K562 (cell line): ENCODE measurements at regions of chr1 and their contacts with region 1.

Region 1: GRCh38 chr1:113207019-113207418 is 134.0 kb downstream of the LRIG2 start:
- DNase-seq: peak in 2 of 4 experiments; percentile 29 to 37
- ATAC-seq: no peak; the same call in 2 of the 3 replicates
- H3K4me3 ChIP-seq: no peak overlapping the region
- H3K27ac ChIP-seq: 0 out of 3 replicates have a peak overlapping the region, but pooled peaks have one; percentile 4
- H3K4me1 ChIP-seq: peaks cover 36 to 43% of the 10 kb centered on the region in 2 experiments
- H3K27me3 ChIP-seq: no peaks in the 10 kb centered on the region
- CTCF ChIP-seq: no peak
- EP300 ChIP-seq: peak; percentile 40; the same call in 1 of the 2 replicates
- POLR2A ChIP-seq: no peak
- RAD21 ChIP-seq: no peak

Region 2: GRCh38 chr1:113219377-113219776 is 12.4 kb after region 1 on chr1:
- CTCF ChIA-PET with region 1: no interaction called
- POLR2A ChIA-PET with region 1: interaction called, 10 read pairs
- in situ Hi-C with region 1: no loop called
- intact Hi-C with region 1: no loop called
- DNase-seq: peak in 2 of 4 experiments; percentile 29 to 56
- ATAC-seq: peak; percentile 75
- H3K4me3 ChIP-seq: no peak overlapping the region
- H3K27ac ChIP-seq: no peak overlapping the region
- H3K4me1 ChIP-seq: peaks cover 22 to 32% of the 10 kb centered on the region in 2 experiments
- H3K27me3 ChIP-seq: no peaks in the 10 kb centered on the region
- CTCF ChIP-seq: peak; percentile 52 to 64 (median 55)
- EP300 ChIP-seq: no peak
- POLR2A ChIP-seq: no peak
- RAD21 ChIP-seq: peak in 1 of 2 experiments; percentile 43; a peak in 2 of 4 replicates

Region 3: GRCh38 chr1:113255720-113256347 is 48.8 kb after region 1 on chr1:
- CTCF ChIA-PET with region 1: no interaction called
- POLR2A ChIA-PET with region 1: no interaction called
- in situ Hi-C with region 1: no loop called
- intact Hi-C with region 1: no loop called
- DNase-seq: no peak
- ATAC-seq: no peak
- H3K4me3 ChIP-seq: no peak overlapping the region
- H3K27ac ChIP-seq: no peak overlapping the region
- H3K4me1 ChIP-seq: no peaks in the 10 kb centered on the region; a peak in 1 of 5 replicates
- H3K27me3 ChIP-seq: peaks cover 3 to 14% of the 10 kb centered on the region in 2 experiments; a peak in 2 of 5 replicates
- CTCF ChIP-seq: no peak
- EP300 ChIP-seq: no peak
- POLR2A ChIP-seq: no peak
- RAD21 ChIP-seq: no peak